ENCODE measurements at regions of chr4 and their contacts with region 1.

Region 1: DNA sequence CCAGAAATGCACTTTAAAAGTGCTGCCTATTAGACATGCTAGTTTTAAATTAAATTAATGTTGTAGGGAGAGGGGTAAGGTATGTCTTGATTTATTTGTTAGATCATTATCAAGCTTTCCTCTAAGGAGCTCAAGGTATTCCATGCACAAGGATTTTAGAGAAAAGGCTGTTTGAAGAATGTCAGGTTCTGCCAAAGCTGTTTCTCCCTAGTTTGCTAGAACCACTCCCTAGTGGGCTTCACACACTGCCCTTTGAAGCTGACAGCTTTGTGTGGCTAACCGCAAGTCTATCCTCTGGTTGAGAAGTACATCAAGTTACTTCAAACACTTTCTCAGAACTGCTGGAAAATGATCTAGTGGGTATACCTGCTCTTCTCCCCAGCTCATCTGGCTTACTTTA is 32.3 kb downstream of the RASL11B start:
- DNase-seq: no peak
- H3K4me3 Mint-ChIP-seq: no peak overlapping the region
- H3K27ac Mint-ChIP-seq: no peak overlapping the region
- H3K4me1 Mint-ChIP-seq: peaks cover 17% of the 10 kb centered on the region
- H3K27me3 Mint-ChIP-seq: no peaks in the 10 kb centered on the region

Region 2: DNA sequence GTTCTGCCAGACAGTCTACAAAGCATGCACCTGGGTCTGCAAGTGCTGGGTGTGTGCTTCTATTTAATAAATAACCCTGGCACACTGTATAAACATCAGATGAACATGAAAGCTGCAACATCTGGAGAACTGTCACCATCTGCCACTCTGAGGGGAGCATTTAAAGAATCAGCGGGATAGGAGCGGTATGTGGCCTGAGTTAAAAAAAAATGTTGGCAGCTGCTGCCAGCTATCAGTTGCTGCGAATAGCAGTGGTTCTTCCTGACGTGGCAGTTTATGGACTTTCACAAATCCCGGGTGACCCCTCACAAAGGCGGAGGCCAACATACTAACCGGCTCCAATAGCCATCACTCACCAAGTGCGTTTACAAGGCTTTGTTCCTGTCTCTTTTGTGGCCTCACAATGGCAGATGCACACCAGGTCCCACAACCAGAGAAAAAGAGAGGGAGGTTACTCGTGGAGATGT is 62.8 kb after region 1 on chr4:
- CTCF ChIA-PET with region 1: no interaction called
- POLR2A ChIA-PET with region 1: no interaction called
- intact Hi-C with region 1: loop called (anchors 10 kb)
- DNase-seq: no peak
- H3K4me3 Mint-ChIP-seq: no peak overlapping the region
- H3K27ac Mint-ChIP-seq: no peak overlapping the region
- H3K4me1 Mint-ChIP-seq: no peaks in the 10 kb centered on the region
- H3K27me3 Mint-ChIP-seq: no peaks in the 10 kb centered on the region

Region 3: DNA sequence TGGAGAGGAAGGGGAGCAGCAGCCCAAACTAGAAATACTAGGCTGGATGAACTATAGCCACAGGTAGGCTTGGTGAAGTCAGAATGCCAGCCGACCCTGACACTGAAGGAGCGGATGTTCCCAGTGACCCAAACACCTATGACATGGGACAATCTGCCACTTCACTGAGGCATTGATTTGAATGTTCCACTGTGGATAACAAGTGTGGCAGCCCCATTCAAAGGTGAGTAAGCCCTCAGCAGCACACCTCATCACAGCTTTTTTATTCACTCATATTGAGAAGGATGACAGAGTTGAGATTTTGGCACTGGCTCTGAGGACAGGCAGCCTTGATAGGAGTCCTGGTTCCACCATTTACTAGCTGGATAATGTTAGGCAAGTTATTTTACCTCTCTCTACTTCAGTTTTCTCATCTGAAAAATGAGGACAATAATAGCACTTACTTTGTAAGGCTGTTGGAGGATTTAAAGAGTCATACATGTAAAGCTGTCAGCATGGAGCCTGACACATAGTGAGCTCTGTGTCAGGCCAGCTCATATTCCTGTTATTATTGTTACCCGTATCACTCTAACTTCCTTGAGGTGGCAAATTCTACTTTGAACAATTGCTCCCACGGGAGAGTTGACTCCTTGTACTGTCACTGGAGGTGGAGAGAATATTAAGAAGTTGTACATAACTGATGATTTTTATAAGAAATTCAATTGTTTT is 82.2 kb after region 1 on chr4:
- CTCF ChIA-PET with region 1: no interaction called
- POLR2A ChIA-PET with region 1: no interaction called
- intact Hi-C with region 1: loop called (anchors 2 kb)
- DNase-seq: peak; percentile 20
- H3K4me3 Mint-ChIP-seq: no peak overlapping the region
- H3K27ac Mint-ChIP-seq: no peak overlapping the region
- H3K4me1 Mint-ChIP-seq: peaks cover 2% of the 10 kb centered on the region
- H3K27me3 Mint-ChIP-seq: no peaks in the 10 kb centered on the region

Measured in activated CD4-positive, alpha-beta memory T cell treated with anti-CD3 and anti-CD28 coated beads for 36 hours (primary cell).